Gastrocnemius medialis (tissue), 4 donors: ENCODE measurements at regions of chr15 and their contacts with region 1.

Region 1: DNA sequence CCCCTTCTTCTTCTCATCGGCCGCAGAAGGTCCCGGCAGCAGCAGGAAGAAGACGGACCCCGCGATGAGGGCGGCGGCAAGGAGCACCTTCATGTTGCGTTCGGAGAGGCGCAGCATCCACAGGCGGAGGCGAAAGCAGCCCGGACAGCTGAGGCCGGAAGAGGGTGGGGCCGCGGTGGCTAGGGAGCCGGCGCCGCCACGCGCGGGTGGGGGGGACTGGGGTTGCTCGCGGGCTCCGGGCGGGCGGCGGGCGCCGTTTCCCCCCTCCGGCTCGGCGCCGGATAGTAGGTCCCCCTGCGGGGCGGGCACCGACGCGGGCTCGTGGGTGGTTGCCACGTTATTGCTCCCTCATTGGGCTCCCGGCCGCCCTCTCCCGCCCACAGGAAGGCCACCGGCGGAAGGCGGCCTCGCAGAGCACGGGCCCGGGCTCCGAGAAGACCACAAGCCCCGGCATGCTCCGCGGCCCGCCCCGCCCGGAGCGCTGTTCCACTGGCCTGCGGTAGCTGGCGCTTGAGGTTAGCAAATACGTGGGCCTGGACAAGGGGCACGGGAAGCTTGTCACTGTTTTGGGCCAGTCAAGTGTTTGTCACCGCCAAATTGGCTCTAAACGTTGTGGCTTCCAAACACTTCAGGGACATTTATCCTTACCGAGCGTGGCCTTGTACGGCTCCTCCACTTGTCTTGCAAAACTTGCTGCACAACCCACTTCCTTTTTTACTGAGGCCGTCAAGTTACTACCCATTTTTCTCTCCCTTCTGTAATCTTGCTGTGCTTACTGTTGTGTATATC is at the start of gene PPIB:
- DNase-seq: peak; percentile 95 to 98
- ATAC-seq: peak; percentile 82 to 85
- H3K4me3 ChIP-seq: peak within 1 kb of the TSS; percentile 83 to 96 (median 88)
- H3K27ac ChIP-seq: peak within 1 kb of the TSS; percentile 84 to 96 (median 94)
- H3K4me1 ChIP-seq: peaks cover 23 to 24% of the 10 kb centered on the region in 2 donors
- H3K27me3 ChIP-seq: no peaks in the 10 kb centered on the region
- CTCF ChIP-seq: peak in 4 of 5 experiments; percentile 19 to 55 (median 38)
- POLR2A ChIP-seq: peak; percentile 69 to 91
- total RNA-seq, gene PPIB: 26.8 to 78.5 (median 40.2) TPM

Region 2: DNA sequence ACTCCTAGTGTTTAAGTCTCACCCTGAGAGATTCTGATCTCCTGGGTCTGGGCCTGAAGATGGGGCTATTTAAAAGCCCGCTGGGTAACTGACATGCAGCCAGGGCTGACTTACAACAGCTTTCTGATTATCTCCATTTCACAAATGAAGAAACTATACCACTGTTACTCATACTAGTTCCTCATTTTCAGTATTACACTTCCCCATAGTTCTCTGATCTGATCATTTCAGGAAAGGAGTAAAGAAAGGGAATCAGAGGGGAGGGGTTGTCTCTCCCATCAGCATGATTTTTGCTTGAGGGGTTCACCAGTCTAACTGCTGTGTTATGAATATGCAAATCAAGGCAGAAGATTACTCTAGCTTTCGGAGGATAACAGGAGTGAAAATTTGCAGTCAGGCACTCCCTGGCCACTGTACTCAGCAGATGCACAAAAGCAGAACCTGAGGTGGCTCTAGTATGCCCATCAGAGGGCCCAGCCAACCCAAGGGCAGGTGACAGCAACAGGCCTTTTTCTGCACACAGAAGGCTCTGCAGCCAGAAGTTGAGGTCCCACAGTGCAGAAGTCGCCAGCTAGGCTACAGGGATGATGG is 176.2 kb before region 1 on chr15:
- in situ Hi-C with region 1: no loop called
- intact Hi-C with region 1: no loop called
- DNase-seq: no peak
- ATAC-seq: no peak
- H3K4me3 ChIP-seq: no peak overlapping the region
- H3K27ac ChIP-seq: peak overlapping the region; percentile 93 to 96 (median 94)
- H3K4me1 ChIP-seq: peaks cover 78 to 80% of the 10 kb centered on the region in 2 donors
- H3K27me3 ChIP-seq: no peaks in the 10 kb centered on the region
- CTCF ChIP-seq: no peak
- POLR2A ChIP-seq: no peak

Region 3: DNA sequence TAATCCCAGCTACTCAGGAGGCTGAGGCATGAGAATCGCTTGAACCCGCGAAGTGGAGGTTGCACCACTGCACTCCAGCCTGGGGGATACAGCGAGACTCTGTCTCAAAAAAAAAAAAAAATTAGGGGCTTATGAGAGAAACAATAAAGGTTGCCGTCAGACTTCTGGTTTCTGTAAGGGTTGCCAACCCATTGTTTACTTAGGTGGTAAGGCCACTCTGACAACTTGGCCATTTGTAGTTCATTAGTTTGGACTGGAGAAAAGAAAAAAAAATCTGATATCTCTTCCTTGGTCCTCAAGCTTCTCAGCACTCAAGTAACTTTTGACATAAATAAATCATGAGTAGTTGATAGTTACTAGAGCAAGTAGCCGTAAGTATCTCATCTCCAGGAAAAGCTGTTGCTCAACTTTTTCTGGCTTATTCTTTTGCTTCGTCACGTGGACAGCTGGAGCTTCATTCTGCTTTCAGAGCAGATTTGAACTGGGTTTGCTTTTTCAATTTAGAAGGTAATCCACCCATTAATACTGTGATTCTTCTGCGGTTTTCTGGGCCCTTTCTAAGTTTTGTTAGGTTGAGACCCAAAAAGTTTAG is 57.9 kb before region 1 on chr15:
- in situ Hi-C with region 1: no loop called
- intact Hi-C with region 1: loop called (anchors 5 kb)
- DNase-seq: peak; percentile 64
- ATAC-seq: peak; percentile 94 to 98
- H3K4me3 ChIP-seq: no peak overlapping the region
- H3K27ac ChIP-seq: peak overlapping the region; percentile 62 to 85 (median 78)
- H3K4me1 ChIP-seq: peaks cover 43 to 85% of the 10 kb centered on the region in 2 donors
- H3K27me3 ChIP-seq: no peaks in the 10 kb centered on the region
- CTCF ChIP-seq: no peak
- POLR2A ChIP-seq: no peak

Region 4: GRCh38 chr15:64256051-64256450 is 93.0 kb after region 1 on chr15:
- in situ Hi-C with region 1: no loop called
- intact Hi-C with region 1: no loop called
- DNase-seq: no peak
- ATAC-seq: no peak
- H3K4me3 ChIP-seq: no peak overlapping the region
- H3K27ac ChIP-seq: no peak overlapping the region
- H3K4me1 ChIP-seq: peaks cover 0 to 3% of the 10 kb centered on the region in 2 donors
- H3K27me3 ChIP-seq: no peaks in the 10 kb centered on the region
- CTCF ChIP-seq: no peak
- POLR2A ChIP-seq: no peak

Region 5: GRCh38 chr15:64355944-64356709 is 193.1 kb after region 1 on chr15 and contains the start of gene CSNK1G1:
- in situ Hi-C with region 1: no loop called
- intact Hi-C with region 1: loop called (anchors 2 kb)
- DNase-seq: peak; percentile 91
- ATAC-seq: peak; percentile 99
- H3K4me3 ChIP-seq: peak within 1 kb of the TSS; percentile 78 to 97 (median 92)
- H3K27ac ChIP-seq: peak within 1 kb of the TSS; percentile 65 to 90 (median 80)
- H3K4me1 ChIP-seq: peaks cover 8 to 9% of the 10 kb centered on the region in 2 donors
- H3K27me3 ChIP-seq: no peaks in the 10 kb centered on the region
- CTCF ChIP-seq: peak in 2 of 5 experiments; percentile 17
- POLR2A ChIP-seq: peak in 1 of 2 donors; percentile 14
- total RNA-seq, gene CSNK1G1: 5.3 to 26.6 (median 6.5) TPM

Region 6: DNA sequence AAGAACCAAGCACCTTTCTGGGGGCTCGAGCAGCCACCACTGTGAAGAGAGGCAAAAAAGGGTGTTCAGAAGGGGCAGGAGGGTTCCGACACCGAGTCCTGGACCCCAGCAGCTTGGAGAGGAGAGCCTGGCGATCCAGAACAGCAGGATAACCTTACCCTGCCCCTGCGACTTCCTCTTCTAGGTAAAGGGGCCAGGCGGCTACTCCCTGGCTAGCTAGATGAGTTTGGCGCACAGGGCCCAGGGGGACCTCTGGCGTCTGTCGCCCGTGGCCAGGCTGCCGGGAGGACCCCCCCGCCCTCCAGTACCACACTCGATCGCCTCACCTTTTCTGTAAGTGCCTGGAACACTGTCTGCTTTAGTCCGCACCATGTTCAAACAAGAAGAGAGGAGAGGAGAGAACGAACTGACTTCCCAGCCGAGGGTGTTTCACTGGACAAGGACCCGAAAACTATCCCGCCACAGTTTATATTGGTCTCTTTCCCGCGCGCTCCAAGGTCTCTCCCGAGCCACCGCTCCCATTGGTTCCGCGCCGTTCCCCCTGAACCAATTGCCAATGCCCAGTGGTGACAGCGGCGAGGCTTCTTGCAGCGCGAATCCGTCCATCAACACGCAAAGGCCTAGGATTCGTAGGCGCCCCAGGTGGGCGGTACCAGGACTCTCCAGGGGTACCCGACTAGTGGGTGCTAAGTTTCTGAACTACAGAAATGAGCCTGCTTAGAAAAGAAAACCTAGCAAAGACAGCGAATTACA is 218.1 kb after region 1 on chr15 and contains the start of gene PCLAF:
- in situ Hi-C with region 1: no loop called
- intact Hi-C with region 1: loop called (anchors 5 kb)
- DNase-seq: peak; percentile 92
- ATAC-seq: peak; percentile 99 to 100
- H3K4me3 ChIP-seq: peak within 1 kb of the TSS; percentile 47 to 74 (median 61)
- H3K27ac ChIP-seq: no peak within 1 kb of the TSS
- H3K4me1 ChIP-seq: peaks cover 9 to 10% of the 10 kb centered on the region in 2 donors
- H3K27me3 ChIP-seq: no peaks in the 10 kb centered on the region
- CTCF ChIP-seq: no peak
- POLR2A ChIP-seq: no peak
- total RNA-seq, gene PCLAF: 1.6 TPM in 1 of 4 donors, not detected in the others

Region 7: DNA sequence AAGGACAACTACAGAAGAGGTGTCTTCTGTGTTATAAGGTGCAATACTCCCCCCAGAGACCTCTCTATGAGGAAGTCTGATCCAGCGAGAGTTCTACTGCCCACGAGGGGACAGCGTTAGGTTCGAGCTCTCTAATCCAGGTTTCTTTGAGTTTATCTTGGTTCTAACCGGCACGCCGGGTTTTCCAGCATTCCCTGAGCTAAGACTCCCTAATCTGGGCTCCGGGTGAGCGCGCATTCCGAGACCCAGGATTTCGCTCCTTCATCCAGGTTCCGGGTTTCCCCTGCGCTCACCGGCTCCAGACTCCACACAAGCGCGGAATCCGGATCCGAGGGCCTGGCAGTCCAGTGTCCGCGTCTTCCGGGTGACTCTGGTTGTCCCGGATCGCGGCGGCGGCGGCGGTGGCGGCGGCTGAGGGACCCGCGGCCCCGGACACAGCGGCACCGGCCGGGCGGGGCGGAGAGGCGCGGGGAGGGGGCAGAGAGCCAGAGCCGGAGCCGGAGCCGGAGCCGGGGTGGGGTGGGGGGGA is 297.2 kb after region 1 on chr15 and contains the start of gene ZNF609:
- in situ Hi-C with region 1: no loop called
- intact Hi-C with region 1: loop called (anchors 5 kb)
- DNase-seq: peak; percentile 85 to 91
- ATAC-seq: peak; percentile 84 to 90
- H3K4me3 ChIP-seq: peak within 1 kb of the TSS; percentile 71 to 76 (median 72)
- H3K27ac ChIP-seq: peak within 1 kb of the TSS; percentile 83 to 91 (median 88)
- H3K4me1 ChIP-seq: peaks cover 43 to 47% of the 10 kb centered on the region in 2 donors
- H3K27me3 ChIP-seq: no peaks in the 10 kb centered on the region
- CTCF ChIP-seq: peak in 2 of 5 experiments; percentile 19 to 32
- POLR2A ChIP-seq: peak; percentile 40 to 58
- total RNA-seq, gene ZNF609: 10.3 to 16.5 (median 12.4) TPM

Region 8: DNA sequence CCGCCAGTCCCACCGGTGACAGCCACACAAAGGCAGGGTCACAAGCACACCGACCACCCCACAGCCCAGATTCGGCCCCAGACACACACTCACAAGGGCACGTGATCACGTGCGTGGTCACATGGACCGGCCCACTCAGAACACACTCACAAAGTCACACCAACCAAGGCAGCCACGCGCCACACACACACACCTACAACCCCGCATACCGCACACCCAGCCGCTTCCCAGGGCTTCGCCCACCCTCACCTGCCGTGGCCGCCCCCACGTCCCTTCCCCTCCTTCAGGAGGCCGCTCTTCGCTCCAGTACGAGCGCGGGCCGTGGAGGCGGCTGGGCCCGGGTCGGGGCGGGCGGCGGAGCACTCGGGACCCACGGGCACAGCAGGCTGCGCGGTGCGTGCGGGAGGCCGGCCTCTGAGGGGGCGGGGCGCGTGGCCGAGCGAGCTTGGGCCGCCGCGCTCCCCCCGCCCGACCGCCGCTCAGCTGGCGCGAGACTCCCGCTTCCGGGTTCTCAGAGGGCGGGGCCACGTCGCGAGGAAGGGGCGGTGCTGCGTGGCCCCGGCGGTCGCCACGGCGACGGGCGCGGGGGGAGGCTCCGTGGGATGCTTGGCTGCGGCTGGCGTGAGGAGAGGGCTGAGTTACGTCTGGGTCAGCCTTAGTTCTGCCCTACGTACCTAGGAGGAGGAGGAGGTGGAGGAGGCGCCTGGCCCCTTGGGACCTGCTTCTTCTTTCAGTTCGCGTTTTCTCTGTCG is 826.5 kb after region 1 on chr15 and contains the start of gene SPG21:
- in situ Hi-C with region 1: no loop called
- intact Hi-C with region 1: loop called (anchors 5 kb)
- DNase-seq: peak; percentile 76 to 82
- ATAC-seq: peak; percentile 89 to 90
- H3K4me3 ChIP-seq: peak within 1 kb of the TSS; percentile 79 to 100 (median 98)
- H3K27ac ChIP-seq: peak within 1 kb of the TSS; percentile 91 to 99 (median 99)
- H3K4me1 ChIP-seq: peaks cover 8 to 22% of the 10 kb centered on the region in 2 donors
- H3K27me3 ChIP-seq: no peaks in the 10 kb centered on the region
- CTCF ChIP-seq: no peak
- POLR2A ChIP-seq: peak; percentile 73 to 81
- total RNA-seq, gene SPG21: 61.9 to 84.4 (median 72.5) TPM